Activated B cell treated with CpG ODN at 0.5 μM for 24 hours (primary cell): ENCODE measurements at regions of chr3 and their contacts with region 1.

Region 1: GRCh38 chr3:193971261-193971751 is 164.6 kb upstream of the HES1 start:
- DNase-seq: peak; percentile 37
- ATAC-seq: peak; percentile 93
- H3K4me3 Mint-ChIP-seq: peak overlapping the region; percentile 77
- H3K27ac Mint-ChIP-seq: peak overlapping the region; percentile 91
- H3K4me1 Mint-ChIP-seq: peaks cover 29% of the 10 kb centered on the region
- H3K27me3 Mint-ChIP-seq: peaks cover 10% of the 10 kb centered on the region
- CTCF ChIP-seq: no peak

Region 2: DNA sequence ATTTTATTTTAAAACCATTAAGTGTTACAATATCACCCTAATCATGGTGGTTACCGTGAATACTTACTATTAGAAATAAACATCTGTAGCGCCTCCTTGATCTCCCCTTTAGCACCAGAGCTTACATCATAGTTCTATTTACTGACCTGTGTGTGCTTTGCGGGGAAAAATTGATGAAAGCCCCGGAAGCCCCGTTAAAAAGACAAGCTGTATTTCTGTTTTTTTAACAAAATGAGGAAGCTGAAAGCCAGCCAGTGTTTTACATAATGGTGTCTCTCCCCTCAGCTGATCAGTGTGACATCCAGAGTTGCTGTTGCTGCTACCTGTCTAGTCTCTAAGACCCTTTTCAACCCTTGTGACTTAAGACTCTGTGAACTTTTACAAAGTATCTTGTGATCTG is 277.5 kb before region 1 on chr3:
- CTCF ChIA-PET with region 1: no interaction called
- POLR2A ChIA-PET with region 1: no interaction called
- intact Hi-C with region 1: loop called (anchors 10 kb)
- DNase-seq: no peak
- ATAC-seq: peak; percentile 89
- H3K4me3 Mint-ChIP-seq: peak overlapping the region; percentile 61
- H3K27ac Mint-ChIP-seq: peak overlapping the region; percentile 91
- H3K4me1 Mint-ChIP-seq: peaks cover 24% of the 10 kb centered on the region
- H3K27me3 Mint-ChIP-seq: no peaks in the 10 kb centered on the region
- CTCF ChIP-seq: no peak

Region 3: DNA sequence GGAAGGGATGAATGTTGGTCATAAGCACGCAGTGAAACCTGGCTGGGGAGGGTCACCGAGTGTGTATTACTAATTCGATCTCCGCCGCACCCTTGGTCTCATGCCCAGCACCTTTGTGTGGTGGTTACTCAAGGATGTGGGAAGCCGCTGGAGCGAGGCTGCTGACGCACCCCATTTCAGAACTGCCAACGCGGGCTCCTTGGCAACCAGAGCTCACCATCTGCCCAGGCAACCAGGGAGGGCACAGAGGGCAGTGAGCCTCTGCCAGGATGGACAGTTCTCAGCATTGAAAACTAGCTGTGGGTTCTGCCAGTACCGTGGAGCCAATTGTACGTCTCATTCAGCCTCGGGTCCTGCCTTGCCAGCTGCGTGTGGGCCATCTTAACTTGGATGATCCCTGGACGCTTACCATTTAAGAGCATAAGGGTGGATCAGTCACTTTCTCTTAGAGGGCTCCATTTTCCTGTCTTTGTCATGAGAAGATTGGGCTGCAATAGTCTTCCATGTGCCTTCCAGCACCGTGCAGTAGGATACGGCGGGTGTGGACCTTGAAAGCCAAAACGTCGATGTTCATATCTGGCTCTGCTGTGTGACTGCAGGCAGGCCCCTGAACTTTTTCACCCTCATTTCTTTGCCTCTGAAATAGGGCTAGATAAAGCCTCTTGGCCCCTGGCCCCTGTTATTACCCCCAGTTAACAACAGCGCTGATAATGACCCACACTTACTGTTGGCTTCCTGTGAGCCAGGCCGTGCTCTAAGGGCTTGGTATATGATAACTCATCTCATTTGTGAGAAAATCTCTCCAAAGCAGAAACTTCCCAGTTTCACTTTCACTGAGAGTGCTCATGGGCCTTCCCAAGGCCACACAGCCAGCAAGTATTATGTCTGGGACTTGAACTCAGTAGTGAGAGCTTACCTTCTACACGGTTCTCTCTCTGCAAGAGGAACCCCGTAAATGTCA is 139.5 kb before region 1 on chr3:
- CTCF ChIA-PET with region 1: no interaction called
- POLR2A ChIA-PET with region 1: interaction called, 4 read pairs
- intact Hi-C with region 1: loop called (anchors 2 kb)
- DNase-seq: no peak
- ATAC-seq: peak; percentile 85
- H3K4me3 Mint-ChIP-seq: peak overlapping the region; percentile 48
- H3K27ac Mint-ChIP-seq: peak overlapping the region; percentile 87
- H3K4me1 Mint-ChIP-seq: peaks cover 40% of the 10 kb centered on the region
- H3K27me3 Mint-ChIP-seq: peaks cover 4% of the 10 kb centered on the region
- CTCF ChIP-seq: no peak

Region 4: GRCh38 chr3:193874989-193875593 is 96.2 kb before region 1 on chr3:
- CTCF ChIA-PET with region 1: no interaction called
- POLR2A ChIA-PET with region 1: no interaction called
- intact Hi-C with region 1: no loop called
- DNase-seq: no peak
- ATAC-seq: no peak
- H3K4me3 Mint-ChIP-seq: no peak overlapping the region
- H3K27ac Mint-ChIP-seq: no peak overlapping the region
- H3K4me1 Mint-ChIP-seq: peaks cover 36% of the 10 kb centered on the region
- H3K27me3 Mint-ChIP-seq: no peaks in the 10 kb centered on the region
- CTCF ChIP-seq: no peak

Region 5: DNA sequence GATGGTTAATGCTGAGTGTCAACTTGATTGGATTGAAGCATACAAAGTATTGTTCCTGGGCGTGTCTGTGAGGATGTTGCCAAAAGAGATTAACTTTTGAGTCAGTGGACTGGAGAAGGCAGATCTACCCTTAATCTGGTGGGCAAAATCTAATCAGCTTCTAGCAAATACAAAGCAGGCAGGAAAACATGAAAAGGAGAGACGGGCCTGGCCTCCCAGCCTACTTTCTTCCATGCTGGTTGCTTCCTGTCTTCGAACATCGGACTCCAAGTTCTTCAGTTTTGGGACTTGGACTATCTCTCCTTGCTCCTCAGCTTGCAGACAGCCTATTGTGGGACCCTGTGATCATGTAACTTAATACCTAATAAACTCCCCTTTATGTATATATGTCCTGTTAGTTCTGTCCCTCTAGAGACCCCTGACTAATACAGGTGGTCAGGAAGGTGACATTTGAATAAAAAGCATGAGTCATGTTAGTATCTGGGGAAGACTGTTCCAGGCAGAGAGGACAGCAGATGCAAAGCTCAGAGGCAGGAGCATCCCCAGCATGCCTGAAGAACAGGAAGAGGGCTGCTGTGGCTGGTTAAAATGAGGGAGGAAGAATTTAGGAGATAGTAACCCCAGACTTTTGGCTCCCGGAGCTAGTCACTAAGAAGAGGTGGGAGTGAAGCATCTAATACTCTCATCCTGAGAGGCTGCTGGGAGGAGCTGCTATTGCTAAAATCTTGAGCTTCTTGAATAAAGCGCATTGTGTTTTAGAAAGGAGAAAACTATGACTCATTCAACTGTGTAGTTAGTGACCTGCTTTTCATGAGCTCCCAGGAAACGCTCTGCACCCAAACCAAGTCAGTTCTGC is 42.7 kb before region 1 on chr3:
- CTCF ChIA-PET with region 1: no interaction called
- POLR2A ChIA-PET with region 1: no interaction called
- intact Hi-C with region 1: no loop called
- DNase-seq: no peak
- ATAC-seq: no peak
- H3K4me3 Mint-ChIP-seq: no peak overlapping the region
- H3K27ac Mint-ChIP-seq: no peak overlapping the region
- H3K4me1 Mint-ChIP-seq: peaks cover 10% of the 10 kb centered on the region
- H3K27me3 Mint-ChIP-seq: peaks cover 7% of the 10 kb centered on the region
- CTCF ChIP-seq: no peak

Region 6: GRCh38 chr3:194032828-194033435 is 61.6 kb after region 1 on chr3:
- CTCF ChIA-PET with region 1: no interaction called
- POLR2A ChIA-PET with region 1: interaction called, 3 read pairs
- intact Hi-C with region 1: loop called (anchors 1 kb)
- DNase-seq: no peak
- ATAC-seq: peak; percentile 70
- H3K4me3 Mint-ChIP-seq: peak overlapping the region; percentile 36
- H3K27ac Mint-ChIP-seq: peak overlapping the region; percentile 9
- H3K4me1 Mint-ChIP-seq: peaks cover 67% of the 10 kb centered on the region
- H3K27me3 Mint-ChIP-seq: no peaks in the 10 kb centered on the region
- CTCF ChIP-seq: no peak

Region 7: DNA sequence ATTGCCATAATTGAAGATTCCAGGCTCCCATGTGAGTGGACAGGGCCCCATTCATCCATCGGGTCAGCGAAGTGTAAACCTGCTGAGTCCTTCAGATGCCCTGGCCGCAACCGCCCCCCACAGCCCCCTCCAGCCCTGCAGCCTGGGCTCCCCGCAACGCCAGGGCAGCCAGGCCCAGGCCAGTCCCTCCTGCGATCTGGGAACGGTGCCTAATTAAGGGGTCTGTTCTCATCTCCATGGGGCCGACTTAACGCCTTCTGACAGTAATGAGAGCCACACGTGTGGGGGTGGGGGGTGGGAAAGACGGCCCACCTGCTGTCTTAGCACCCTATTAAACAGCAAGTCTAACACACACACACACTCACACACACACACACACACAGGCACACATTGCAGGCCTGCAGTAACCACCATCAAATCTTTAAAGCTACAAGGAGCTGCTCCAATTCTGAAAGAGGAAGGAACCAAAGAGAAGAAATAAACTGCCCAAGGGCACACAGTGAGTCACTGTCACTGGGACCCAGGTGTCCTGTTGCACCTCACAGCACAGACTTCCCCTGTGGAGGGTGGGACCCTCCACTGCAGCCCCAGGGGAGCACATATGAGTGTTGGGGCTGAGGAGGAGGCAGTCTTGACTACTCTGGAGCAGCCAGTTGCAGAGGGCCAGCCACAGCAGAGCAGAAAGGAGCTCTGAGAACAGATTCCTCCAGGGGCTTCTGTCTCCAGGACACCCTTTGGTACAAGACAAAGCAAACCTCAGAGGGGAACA is 132.9 kb after region 1 on chr3:
- CTCF ChIA-PET with region 1: interaction called, 5 read pairs
- POLR2A ChIA-PET with region 1: interaction called, 33 read pairs
- intact Hi-C with region 1: loop called (anchors 1 kb)
- DNase-seq: peak; percentile 75
- ATAC-seq: peak; percentile 87
- H3K4me3 Mint-ChIP-seq: peak overlapping the region; percentile 75
- H3K27ac Mint-ChIP-seq: peak overlapping the region; percentile 87
- H3K4me1 Mint-ChIP-seq: peaks cover 95% of the 10 kb centered on the region
- H3K27me3 Mint-ChIP-seq: no peaks in the 10 kb centered on the region
- CTCF ChIP-seq: no peak

Region 8: GRCh38 chr3:194306109-194306686 is 334.9 kb after region 1 on chr3:
- CTCF ChIA-PET with region 1: interaction called, 4 read pairs
- POLR2A ChIA-PET with region 1: interaction called, 4 read pairs
- intact Hi-C with region 1: loop called (anchors 2 kb)
- DNase-seq: peak; percentile 51
- ATAC-seq: peak; percentile 61
- H3K4me3 Mint-ChIP-seq: peak overlapping the region; percentile 70
- H3K27ac Mint-ChIP-seq: peak overlapping the region; percentile 84
- H3K4me1 Mint-ChIP-seq: no peaks in the 10 kb centered on the region
- H3K27me3 Mint-ChIP-seq: no peaks in the 10 kb centered on the region
- CTCF ChIP-seq: no peak

Region 9: GRCh38 chr3:195182470-195182795 is 1211.1 kb after region 1 on chr3:
- CTCF ChIA-PET with region 1: no interaction called
- POLR2A ChIA-PET with region 1: no interaction called
- intact Hi-C with region 1: no loop called
- DNase-seq: no peak
- ATAC-seq: no peak
- H3K4me3 Mint-ChIP-seq: no peak overlapping the region
- H3K27ac Mint-ChIP-seq: no peak overlapping the region
- H3K4me1 Mint-ChIP-seq: peaks cover 25% of the 10 kb centered on the region
- H3K27me3 Mint-ChIP-seq: peaks cover 2% of the 10 kb centered on the region
- CTCF ChIP-seq: no peak